Common myeloid progenitor, CD34-positive (primary cell): ENCODE measurements at regions of chr15 and their contacts with region 1.

Region 1: GRCh38 chr15:43225201-43225949 is 4.6 kb upstream of the EPB42 start:
- DNase-seq: peak; percentile 77 to 88 (median 81)
- H3K4me3 ChIP-seq: no peak overlapping the region
- H3K27ac ChIP-seq: no peak overlapping the region
- H3K4me1 ChIP-seq: peaks cover 0 to 17% (median 4%) of the 10 kb centered on the region in 4 experiments
- H3K27me3 ChIP-seq: peaks cover 0 to 2% (median 0%) of the 10 kb centered on the region in 5 experiments

Region 2: GRCh38 chr15:43241100-43241499 is 15.7 kb after region 1 on chr15:
- CTCF ChIA-PET with region 1: interaction called, 30 read pairs
- POLR2A ChIA-PET with region 1: interaction called, 3 read pairs
- DNase-seq: no peak
- H3K4me3 ChIP-seq: no peak overlapping the region
- H3K27ac ChIP-seq: no peak overlapping the region
- H3K4me1 ChIP-seq: peaks cover 4 to 56% (median 27%) of the 10 kb centered on the region in 4 experiments
- H3K27me3 ChIP-seq: peaks cover 0 to 30% (median 11%) of the 10 kb centered on the region in 5 experiments

Region 3: DNA sequence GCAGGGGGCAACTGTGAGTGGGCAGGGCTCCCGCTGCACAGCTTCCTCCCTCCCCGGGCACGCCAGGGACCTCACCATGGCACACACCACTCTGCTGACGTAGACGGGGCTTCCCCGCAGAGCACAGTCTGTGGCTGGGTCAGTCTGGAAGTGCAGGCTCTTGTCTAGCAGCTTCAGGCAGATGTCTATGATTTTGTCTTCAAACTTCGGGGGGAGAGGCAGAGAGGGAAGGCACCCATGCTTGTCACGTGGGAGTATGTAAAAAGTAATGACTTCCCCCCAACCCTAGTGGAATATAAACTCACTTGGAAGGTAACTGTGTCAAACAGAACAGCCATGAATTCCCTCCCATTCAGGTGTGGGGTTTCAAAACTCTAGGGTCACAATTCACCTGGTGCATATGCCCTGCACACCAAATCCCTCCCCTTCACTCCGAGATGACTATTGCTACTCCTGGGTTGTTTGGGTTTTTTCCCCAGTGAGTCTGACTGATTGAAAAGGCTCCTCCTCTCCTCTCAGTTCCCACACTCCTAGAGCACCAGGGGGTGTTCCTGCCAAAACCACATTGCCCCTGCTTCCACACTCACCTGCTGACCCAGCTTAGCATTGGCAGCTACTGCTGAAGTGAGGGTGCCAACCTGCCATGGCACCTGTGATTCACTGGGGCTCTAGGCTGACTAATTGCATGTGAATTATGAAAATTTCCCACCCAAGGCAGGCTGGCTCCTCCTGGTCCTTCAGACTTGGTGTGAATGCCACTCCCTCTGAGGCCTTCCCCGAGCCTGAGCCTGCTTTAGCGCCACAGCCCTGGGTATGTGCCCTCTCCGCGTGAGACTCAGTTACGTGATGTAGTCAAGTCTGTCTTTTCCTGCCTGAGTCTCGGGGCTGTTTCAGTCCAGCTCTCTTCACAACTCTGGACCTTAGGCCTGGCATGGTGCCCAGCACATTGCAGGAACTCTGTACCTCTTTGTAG is 28.3 kb after region 1 on chr15:
- CTCF ChIA-PET with region 1: interaction called, 16 read pairs
- POLR2A ChIA-PET with region 1: no interaction called
- DNase-seq: peak in 2 of 3 donors; percentile 42 to 51
- H3K4me3 ChIP-seq: no peak overlapping the region
- H3K27ac ChIP-seq: no peak overlapping the region
- H3K4me1 ChIP-seq: peaks cover 0 to 51% (median 19%) of the 10 kb centered on the region in 4 experiments
- H3K27me3 ChIP-seq: no peaks in the 10 kb centered on the region

Region 4: DNA sequence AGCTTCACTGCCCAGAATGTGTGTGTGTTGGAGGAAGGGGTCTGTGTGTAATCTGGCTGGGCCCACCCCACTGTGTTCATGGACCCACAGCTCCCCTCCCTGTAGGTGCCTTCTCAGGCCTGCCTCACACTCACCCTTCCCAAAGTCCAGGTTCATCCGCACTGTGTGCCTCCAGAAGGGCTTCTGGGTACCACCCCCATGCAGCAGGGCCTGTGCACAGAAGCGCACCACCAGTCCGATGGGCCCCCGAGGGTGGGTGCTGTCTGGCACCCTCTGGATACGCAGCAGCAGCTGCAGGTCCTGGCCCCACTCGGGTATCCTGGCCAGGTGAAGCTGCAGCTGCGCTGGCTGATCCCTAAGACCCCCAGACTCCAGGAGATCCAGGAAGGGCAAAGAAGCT is 54.1 kb after region 1 on chr15:
- CTCF ChIA-PET with region 1: interaction called, 127 read pairs
- POLR2A ChIA-PET with region 1: interaction called, 3 read pairs
- DNase-seq: no peak
- H3K4me3 ChIP-seq: no peak overlapping the region
- H3K27ac ChIP-seq: no peak overlapping the region
- H3K4me1 ChIP-seq: peaks cover 6 to 17% (median 16%) of the 10 kb centered on the region in 4 experiments
- H3K27me3 ChIP-seq: no peaks in the 10 kb centered on the region